AG04450 (cell line): ENCODE measurements at regions of chr11 and their contacts with region 1.

Region 1: DNA sequence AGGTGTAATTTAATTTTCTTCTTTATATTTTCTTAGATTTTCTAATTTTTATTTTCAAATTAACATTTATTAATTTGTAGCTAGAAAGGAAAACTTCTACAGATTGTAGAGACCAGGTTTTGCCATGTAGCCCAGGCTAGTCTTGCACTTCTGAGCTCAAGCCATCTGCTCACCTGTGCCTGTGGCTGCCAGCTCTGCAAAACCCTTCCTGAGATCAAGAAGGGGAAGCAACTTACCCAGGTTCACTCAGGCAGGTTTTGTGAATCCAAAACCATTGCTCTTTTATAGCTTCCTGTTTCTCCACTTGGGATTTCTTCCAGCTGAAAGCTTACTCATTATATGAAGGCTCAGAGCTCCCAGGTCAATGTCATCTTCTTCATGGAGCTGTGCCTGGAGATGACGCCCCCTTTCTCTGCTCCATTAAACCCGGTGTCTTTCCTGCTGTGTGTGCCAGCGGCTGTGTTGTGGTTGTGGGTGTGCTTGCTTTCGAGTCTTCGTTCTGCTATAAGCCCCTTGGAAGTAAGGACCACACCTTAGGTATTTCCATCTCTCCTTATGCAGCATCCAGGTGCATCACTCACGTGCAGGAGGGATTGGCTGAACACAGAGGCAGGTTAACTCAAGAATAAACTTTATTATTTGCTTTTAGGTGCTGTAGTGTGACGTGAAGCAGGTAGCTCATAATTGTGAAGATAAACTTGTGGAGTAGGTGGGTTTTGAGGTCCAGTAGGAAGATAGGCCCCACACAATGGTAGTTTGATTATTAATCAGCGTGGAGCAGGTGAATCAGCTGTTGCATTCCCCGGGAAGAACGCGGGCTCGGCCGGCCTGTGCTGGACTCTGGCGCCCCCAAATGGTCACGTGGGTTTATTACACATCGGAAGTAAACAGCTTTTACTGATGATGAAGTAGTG is 42.2 kb upstream of the INCENP start:
- DNase-seq: peak; percentile 16
- H3K4me3 ChIP-seq: peak overlapping the region; percentile 27; the same call in 1 of the 2 replicates
- H3K27ac ChIP-seq: no peak overlapping the region
- H3K27me3 ChIP-seq: no peaks in the 10 kb centered on the region
- CTCF ChIP-seq: peak; percentile 88

Region 2: DNA sequence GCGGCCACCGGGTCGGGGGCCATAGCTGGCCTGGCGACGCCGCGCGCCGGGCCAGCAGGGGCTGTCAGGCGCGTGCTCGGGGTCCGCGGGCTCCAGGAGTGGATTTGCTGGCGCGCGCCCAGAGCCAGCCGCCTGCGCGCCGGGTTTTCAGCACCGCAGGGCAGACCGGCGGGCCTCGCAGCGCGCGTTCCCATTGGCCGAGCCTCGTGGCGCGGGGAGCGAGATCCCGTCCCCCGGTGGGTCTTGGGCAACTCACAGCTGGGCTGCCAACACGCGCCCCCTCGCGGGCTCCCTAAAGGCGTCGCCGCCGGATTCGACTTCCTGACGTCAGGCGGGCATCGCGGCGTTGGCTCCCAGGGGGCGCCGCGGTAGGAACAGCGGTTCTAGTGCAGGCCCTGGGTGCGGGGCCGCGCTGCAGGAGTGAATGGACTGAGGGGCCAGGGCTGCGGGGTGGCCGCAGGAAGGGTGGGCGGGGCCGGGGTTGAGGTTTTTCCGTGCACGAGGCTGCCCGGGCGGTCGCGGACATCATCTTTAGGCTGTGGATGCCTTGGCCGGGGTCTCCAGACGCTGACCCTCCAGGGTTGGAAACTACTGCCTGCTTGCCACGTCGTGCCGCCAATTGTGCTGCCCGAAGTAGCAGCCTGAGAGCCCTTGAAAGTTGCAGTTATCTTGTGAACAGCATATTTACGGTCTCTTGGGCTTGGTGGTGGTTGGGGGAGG is 264.7 kb before region 1 on chr11 and contains the start of gene FADS1:
- CTCF ChIA-PET with region 1: interaction called, 14 read pairs
- POLR2A ChIA-PET with region 1: no interaction called
- DNase-seq: peak; percentile 89
- H3K4me3 ChIP-seq: peak within 1 kb of the TSS; percentile 89
- H3K27ac ChIP-seq: peak within 1 kb of the TSS; percentile 86
- H3K27me3 ChIP-seq: no peaks in the 10 kb centered on the region
- CTCF ChIP-seq: peak; percentile 57
- polyA plus RNA-seq, gene FADS1: 50.4 and 52.4 TPM in 2 replicates

Region 3: GRCh38 chr11:61899146-61899841 is 182.3 kb before region 1 on chr11:
- CTCF ChIA-PET with region 1: interaction called, 175 read pairs
- POLR2A ChIA-PET with region 1: interaction called, 4 read pairs
- DNase-seq: no peak
- H3K4me3 ChIP-seq: no peak overlapping the region
- H3K27ac ChIP-seq: no peak overlapping the region
- H3K27me3 ChIP-seq: no peaks in the 10 kb centered on the region
- CTCF ChIP-seq: peak; percentile 99

Region 4: DNA sequence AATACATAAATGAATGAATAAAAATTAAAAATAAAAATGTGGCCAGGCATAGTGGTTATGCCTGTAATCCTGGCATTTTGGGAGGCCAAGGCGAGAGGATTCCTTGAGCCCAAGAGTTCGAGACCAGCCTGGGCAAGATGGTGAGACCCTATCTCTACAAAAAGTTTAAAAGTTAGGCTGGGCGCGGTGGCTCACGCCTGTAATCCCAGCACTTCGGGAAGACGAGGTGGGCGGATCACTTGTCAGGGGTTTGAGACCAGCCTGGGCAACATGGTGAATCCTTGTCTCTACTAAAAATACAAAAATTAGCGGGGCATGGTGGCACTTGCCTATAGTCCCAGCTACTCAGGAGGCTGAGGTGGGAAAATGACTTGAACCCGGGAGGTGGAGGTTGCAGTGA is 141.2 kb before region 1 on chr11:
- CTCF ChIA-PET with region 1: interaction called, 177 read pairs
- POLR2A ChIA-PET with region 1: no interaction called
- DNase-seq: no peak
- H3K4me3 ChIP-seq: no peak overlapping the region
- H3K27ac ChIP-seq: no peak overlapping the region
- H3K27me3 ChIP-seq: peaks cover 18% of the 10 kb centered on the region
- CTCF ChIP-seq: no peak

Region 5: DNA sequence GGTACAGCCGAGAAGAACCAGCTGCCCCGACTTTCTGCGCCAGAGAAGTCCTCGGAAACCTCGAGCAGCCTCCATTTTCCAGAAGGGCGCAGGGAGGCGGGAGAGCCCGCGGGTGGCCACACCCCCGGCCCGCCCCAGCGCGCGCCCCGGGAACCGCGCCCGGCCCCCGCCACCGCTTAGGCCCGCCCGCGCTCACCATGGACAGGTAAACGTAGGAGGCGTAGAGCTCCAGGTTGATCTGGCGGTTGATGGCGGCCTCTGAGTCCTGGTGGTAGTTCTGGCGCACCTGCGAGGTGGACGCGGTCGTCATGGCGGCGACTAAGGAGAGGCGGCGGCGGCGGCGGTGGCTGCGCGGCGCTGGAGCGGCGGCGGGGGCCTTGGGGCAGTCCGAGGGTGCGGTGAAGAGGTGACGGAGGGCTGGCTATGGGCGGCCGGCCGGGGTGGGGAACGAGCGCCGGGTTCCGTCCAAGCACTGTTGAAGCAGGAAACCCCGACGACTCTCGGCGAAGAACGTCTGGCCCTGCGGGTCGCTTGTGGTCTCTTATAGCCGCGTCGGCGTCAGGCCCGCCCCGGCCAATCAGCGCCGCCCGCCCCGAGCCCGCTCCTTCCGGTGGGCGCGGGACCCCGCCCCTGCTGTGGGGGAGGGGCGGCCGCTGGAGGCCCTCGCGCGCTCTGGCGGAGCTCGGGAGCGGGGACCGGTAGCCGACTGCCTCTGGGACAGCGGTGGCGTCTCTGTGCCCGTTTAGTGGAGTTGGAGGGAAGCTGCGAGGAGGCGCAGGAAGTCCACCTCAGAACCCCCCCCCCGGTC is 114.3 kb before region 1 on chr11 and contains the start of gene FTH1:
- CTCF ChIA-PET with region 1: interaction called, 135 read pairs
- POLR2A ChIA-PET with region 1: interaction called, 37 read pairs
- DNase-seq: peak; percentile 77
- H3K4me3 ChIP-seq: peak within 1 kb of the TSS; percentile 100
- H3K27ac ChIP-seq: peak within 1 kb of the TSS; percentile 88
- H3K27me3 ChIP-seq: no peaks in the 10 kb centered on the region
- CTCF ChIP-seq: no peak
- polyA plus RNA-seq, gene FTH1: 3,294 and 4,220 TPM in 2 replicates

Region 6: DNA sequence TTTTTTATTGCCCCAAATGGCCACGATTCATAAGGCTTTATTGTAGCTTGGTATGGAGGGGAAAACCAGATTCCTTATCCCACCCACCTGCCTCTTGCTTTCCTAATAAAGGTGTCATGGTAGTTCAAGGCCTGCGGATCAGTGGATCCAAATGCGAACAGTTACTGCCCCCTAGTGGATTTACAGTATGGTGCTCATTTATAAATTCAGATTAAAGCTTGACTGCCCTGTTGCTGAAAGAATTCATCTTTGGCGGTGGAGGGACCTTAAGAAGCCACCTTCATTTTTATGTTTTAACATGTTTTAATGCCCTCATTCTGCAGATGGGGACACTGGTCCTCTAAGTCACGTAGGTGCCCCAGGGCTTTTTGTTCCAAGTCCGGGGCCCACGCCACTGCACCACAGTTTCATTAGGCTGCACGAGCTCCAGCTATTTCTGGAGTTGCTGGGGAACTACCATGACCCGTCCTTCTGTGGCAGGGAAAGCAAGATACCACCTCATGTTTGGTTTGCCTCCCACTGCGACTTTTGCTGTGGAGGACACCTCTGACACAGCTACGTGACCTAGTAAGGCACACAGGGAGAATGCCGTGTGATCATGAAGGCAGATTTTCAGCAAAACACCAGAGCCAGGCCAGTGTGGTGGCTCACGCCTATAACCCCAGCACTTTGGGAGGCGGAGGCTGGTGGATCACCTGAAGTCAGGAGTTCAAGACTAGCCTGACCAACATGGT is 26.5 kb after region 1 on chr11:
- CTCF ChIA-PET with region 1: interaction called, 67 read pairs
- POLR2A ChIA-PET with region 1: interaction called, 4 read pairs
- DNase-seq: no peak
- H3K4me3 ChIP-seq: no peak overlapping the region
- H3K27ac ChIP-seq: no peak overlapping the region
- H3K27me3 ChIP-seq: no peaks in the 10 kb centered on the region
- CTCF ChIP-seq: peak; percentile 79

Region 7: DNA sequence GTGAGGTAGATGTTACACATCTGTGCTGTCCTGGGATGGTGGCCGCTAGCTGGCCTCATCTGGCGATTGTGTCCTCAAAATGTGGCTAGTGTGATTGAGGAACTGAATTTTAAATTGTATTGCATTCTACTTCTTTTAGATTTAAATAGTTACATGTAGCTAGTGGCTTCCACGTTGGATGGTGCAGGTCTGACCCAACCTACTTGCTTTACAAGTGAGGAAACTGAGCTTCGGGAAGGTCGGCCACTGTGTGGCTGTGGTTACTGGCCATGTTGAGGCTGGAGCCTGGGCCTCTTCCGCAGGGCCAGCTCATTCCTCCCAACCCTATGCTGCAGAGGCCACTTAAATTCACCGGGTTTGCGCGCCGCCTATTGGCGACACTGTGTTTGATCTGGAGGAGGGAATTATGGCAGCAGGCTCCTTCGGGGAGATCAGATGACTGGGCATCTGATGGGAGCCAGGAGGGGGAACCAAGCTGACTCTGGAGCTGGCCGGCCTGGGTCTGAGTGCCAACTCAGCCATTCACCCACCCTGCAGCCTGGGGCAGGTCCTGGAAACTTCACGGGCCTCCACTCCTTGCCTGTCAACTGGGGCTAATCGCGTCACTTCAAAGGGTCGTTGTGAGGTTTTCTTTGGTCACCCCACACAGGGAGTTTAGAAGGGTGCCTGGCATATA is 49.2 kb after region 1 on chr11:
- CTCF ChIA-PET with region 1: no interaction called
- POLR2A ChIA-PET with region 1: no interaction called
- DNase-seq: no peak
- H3K4me3 ChIP-seq: no peak overlapping the region
- H3K27ac ChIP-seq: no peak overlapping the region
- H3K27me3 ChIP-seq: no peaks in the 10 kb centered on the region
- CTCF ChIP-seq: no peak

Region 8: DNA sequence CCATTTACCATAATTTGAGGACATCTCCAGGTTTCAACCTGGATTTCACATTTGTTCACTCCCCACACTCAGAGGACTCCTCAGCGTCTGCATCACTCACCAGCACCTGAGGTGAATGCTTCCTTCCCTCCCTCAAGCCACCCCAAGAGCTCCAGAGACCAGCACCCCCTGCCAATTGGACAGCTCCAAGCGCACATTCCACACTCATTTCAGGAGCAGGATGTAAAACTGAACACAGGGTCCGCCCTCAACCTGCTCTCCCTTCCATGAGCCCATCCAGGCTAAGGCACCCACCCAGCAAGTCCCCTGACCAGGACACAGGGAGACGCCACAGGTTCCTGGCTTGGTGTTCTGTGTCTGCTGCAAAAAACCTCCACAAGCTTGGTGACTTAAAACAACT is 112.3 kb after region 1 on chr11:
- CTCF ChIA-PET with region 1: no interaction called
- POLR2A ChIA-PET with region 1: no interaction called
- DNase-seq: no peak
- H3K4me3 ChIP-seq: no peak overlapping the region
- H3K27ac ChIP-seq: no peak overlapping the region
- H3K27me3 ChIP-seq: peaks cover 6% of the 10 kb centered on the region
- CTCF ChIP-seq: no peak